Left cardiac atrium (tissue), 4 donors: ENCODE measurements at regions of chr2 and their contacts with region 1.

Region 1: DNA sequence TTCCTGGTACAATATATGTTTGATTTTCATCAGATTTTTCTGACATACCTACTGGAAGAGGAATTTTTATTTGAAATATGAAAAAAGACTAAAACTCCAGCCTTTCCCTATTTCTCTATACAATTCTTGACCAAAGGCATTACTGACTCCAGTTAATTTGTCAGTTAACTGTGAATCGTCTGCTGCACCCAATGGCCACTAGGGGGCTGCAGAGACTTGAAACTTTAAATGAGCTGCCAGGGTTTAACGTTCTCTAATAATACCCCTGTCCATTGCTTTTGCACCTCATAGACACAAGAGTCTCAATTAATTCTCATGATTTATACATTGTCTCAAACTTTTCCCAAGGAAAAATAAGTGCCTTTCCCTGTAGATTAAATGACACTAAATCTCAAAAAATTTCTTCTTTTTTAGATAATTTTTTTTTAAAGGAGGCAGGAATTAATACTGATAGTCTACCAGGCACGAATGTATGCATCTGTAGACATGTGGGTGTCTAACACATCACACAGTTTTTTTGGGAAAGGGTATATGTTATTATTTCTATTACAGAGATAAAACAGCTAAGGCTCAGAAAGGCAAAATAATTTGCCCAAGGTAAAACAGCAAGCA is 1.8 kb upstream of the ALK start:
- DNase-seq: peak; percentile 53
- ATAC-seq: no peak

Region 2: GRCh38 chr2:30026087-30027055 is 103.2 kb after region 1 on chr2:
- intact Hi-C with region 1: loop called (anchors 2 to 5 kb)
- DNase-seq: peak; percentile 45
- ATAC-seq: peak; percentile 79 to 82

Region 3: DNA sequence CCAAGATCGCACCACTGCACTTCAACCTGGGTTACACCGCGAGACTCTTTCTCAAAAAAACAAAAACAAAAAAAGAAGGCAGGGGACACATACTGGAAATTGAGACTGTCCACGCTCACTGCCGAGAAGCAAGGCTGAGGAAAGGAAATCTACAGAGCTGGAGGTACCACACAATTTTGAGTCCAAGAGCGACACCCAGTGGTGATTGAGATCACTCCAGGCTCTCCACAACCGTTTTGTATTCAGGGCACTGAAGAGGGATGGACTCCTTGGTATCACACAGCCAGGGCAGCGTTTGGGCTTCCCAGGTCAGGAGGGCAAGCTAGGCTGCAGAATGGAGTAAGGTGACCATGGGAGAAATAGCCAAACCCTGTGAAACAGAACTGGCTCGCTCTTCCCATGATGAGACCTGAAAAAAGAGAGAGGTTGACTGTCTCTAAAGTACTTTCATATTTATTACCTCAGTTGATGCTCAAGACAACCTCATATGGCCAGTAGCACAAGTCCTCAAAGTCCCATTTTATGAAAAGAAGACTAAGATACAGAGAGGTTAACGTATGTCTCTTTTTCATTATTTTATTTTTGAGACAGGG is 149.1 kb after region 1 on chr2:
- intact Hi-C with region 1: loop called in 1 of 2 experiments (anchors 5 kb)
- DNase-seq: peak; percentile 61
- ATAC-seq: peak; percentile 77 to 90